IMR-90 (cell line): ENCODE measurements at regions of chr3 and their contacts with region 1.

Region 1: DNA sequence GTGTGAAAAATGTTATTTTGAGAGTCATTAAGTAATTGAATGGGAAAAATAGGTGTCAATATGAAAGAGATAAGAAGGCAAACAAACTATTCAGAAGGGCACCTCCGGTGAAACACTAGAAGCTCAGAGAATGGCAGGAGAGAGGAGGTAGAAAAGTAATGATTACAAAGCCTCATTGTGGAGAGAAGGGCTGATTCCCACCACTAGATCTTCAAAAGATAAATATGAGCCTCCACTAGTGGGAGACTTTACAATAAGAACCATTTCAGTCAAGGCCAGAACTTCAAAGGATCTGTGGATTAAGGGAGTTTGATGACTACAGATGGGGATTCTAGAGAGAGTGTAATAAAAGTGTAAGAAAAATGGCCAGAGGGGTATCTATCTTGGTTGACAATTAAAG is 535.6 kb downstream of the NLGN1 start:
- DNase-seq: no peak
- ATAC-seq: no peak
- H3K4me3 ChIP-seq: no peak overlapping the region
- H3K27ac ChIP-seq: no peak overlapping the region
- H3K4me1 ChIP-seq: peaks cover 2% of the 10 kb centered on the region; the same call in 1 of the 2 replicates
- H3K27me3 ChIP-seq: no peaks in the 10 kb centered on the region
- CTCF ChIP-seq: no peak
- POLR2A ChIP-seq: no peak
- RAD21 ChIP-seq: no peak

Region 2: DNA sequence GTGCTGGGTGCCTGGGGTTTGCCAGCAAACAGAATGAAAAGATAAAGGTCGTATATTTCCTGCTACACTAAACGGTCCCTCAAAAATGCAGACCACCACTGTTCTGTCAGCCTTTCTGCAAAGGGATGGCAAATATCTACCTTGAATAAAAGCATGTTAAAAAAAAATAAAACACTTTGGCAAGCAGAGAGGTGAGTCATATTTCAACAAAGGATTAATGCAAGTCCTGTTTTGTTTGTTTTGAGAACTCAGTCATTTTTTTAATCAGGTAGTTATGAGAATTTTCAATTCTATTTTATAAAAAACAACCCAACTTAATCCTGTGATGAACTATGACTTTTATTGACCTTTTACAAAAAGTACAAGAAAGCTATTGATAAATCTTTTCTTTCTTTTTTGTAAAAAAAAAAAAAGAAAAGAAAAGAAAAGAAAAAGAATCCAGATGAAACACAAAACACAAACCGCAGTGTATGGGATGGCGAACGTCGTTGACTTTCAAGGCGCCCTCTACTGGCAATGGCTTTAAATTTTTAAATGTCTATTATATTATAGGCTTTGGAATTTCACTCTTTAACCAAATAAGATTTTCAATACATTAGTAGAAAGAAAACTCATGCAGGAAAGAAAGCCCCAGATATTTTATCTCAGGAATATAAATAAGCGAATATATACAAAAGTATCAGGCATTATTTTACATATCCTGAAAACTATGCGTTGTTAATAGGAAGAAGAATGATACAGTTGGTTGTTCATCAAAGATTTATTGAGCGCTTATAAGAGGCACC is 1310.0 kb before region 1 on chr3:
- CTCF ChIA-PET with region 1: no interaction called
- POLR2A ChIA-PET with region 1: interaction called, 10 read pairs
- dilution Hi-C with region 1: no loop called
- in situ Hi-C with region 1: no loop called
- intact Hi-C with region 1: no loop called
- DNase-seq: peak; percentile 71
- ATAC-seq: peak; percentile 44; the same call in 1 of the 2 replicates
- H3K4me3 ChIP-seq: no peak overlapping the region
- H3K27ac ChIP-seq: no peak overlapping the region
- H3K4me1 ChIP-seq: peaks cover 14% of the 10 kb centered on the region
- H3K27me3 ChIP-seq: no peaks in the 10 kb centered on the region
- CTCF ChIP-seq: peak; percentile 66
- POLR2A ChIP-seq: no peak
- RAD21 ChIP-seq: peak; percentile 59

Region 3: DNA sequence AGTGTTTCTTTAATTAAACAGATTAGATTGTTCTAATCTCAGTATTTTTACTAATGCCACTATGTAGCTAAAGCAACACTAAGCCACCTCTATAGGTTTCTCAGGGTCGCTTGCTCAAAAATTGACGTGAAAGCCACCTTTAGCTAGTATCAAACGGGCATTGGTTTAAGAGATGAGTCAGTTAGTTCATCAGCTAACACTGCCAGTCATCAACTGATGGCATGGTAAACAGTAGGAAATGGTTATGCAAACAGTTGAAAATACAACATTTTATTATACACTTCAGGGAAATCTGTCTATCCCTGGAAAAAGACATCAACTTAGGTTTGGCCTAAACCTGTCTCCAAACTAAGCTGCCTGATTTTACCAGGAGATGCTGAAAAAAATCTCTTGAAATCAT is 343.7 kb after region 1 on chr3:
- CTCF ChIA-PET with region 1: no interaction called
- POLR2A ChIA-PET with region 1: no interaction called
- dilution Hi-C with region 1: no loop called
- in situ Hi-C with region 1: no loop called
- intact Hi-C with region 1: no loop called
- DNase-seq: no peak
- ATAC-seq: no peak
- H3K4me3 ChIP-seq: no peak overlapping the region
- H3K27ac ChIP-seq: no peak overlapping the region
- H3K4me1 ChIP-seq: no peaks in the 10 kb centered on the region
- H3K27me3 ChIP-seq: no peaks in the 10 kb centered on the region
- CTCF ChIP-seq: no peak
- POLR2A ChIP-seq: no peak
- RAD21 ChIP-seq: no peak